H1 (cell line): ENCODE measurements at regions of chr5 and their contacts with region 1.

Region 1: DNA sequence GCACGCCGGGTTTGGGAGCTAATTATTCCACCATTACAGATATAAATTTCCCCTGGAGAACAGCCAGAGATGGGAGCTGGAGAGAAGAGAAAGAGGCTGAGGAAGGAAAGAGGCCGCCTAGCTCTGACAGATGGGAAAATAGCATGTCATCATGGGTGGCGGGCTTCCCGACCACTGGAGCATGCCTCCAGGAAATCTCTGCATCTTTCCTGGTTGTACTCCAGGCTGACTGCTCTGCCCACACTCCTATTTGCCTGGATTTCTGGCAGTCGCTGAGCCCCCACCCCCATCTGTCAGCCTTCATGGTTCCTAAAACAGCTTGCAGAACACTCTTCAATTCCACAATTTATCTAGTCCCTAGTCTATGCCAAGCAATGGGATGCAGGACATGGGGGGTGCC is 14.3 kb upstream of the GABRP start:
- DNase-seq: no peak
- H3K4me3 ChIP-seq: no peak overlapping the region
- H3K27ac ChIP-seq: no peak overlapping the region
- H3K4me1 ChIP-seq: peaks cover 4 to 16% (median 11%) of the 10 kb centered on the region in 4 experiments
- H3K27me3 ChIP-seq: no peaks in the 10 kb centered on the region; a peak in 1 of 7 replicates
- CTCF ChIP-seq: no peak
- EP300 ChIP-seq: no peak
- POLR2A ChIP-seq: no peak
- RAD21 ChIP-seq: no peak

Region 2: DNA sequence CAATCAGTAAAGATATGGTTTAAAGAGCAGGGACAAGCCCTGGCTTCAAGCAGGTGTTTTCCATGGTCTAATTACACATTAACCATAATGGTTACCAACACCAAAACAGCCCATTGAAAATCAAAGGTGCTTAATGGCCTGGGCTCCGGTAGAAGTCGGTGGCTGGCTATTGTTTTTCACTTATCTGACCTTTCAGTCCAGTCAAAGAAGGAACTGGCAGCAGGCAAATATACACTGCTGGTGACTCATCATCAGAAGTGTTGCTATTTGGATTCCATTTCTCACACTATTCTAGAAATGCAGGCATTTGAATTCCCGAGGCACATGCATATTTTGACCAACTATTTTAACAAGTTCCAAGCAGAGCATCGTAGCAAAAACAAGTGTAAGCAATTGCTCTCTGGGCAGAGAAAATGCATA is 12.1 kb before region 1 on chr5:
- CTCF ChIA-PET with region 1: interaction called, 151 read pairs
- POLR2A ChIA-PET with region 1: interaction called, 82 read pairs
- DNase-seq: no peak
- H3K4me3 ChIP-seq: no peak overlapping the region
- H3K27ac ChIP-seq: no peak overlapping the region
- H3K4me1 ChIP-seq: peaks cover 8 to 10% (median 9%) of the 10 kb centered on the region in 4 experiments
- H3K27me3 ChIP-seq: no peaks in the 10 kb centered on the region
- CTCF ChIP-seq: no peak
- EP300 ChIP-seq: no peak
- POLR2A ChIP-seq: no peak
- RAD21 ChIP-seq: no peak

Region 3: DNA sequence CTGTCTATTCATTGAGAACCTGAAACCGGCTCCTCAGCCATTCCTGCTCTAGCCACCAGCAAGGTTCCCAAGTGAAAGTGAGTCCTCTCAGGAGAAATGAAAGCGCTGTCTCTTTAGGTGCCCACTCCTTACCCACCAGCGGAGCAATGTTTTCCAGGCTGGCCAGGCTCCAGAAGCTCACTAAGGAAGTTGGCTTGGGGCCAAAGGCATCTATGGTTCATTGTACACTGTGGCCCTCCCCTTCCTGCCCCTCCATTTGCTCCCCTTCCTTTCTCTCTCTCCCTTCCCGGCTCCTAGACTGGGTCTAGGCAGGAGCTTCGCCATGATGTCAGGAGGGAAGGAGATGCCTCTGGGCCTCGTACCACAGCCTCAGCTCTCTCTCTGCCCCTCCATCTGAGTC is 13.2 kb after region 1 on chr5:
- CTCF ChIA-PET with region 1: interaction called, 30 read pairs
- POLR2A ChIA-PET with region 1: interaction called, 13 read pairs
- DNase-seq: no peak
- H3K4me3 ChIP-seq: no peak overlapping the region
- H3K27ac ChIP-seq: no peak overlapping the region
- H3K4me1 ChIP-seq: peaks cover 0 to 5% (median 0%) of the 10 kb centered on the region in 4 experiments; a peak in 1 of 7 replicates
- H3K27me3 ChIP-seq: no peaks in the 10 kb centered on the region
- CTCF ChIP-seq: no peak
- EP300 ChIP-seq: no peak
- POLR2A ChIP-seq: no peak
- RAD21 ChIP-seq: no peak

Region 4: DNA sequence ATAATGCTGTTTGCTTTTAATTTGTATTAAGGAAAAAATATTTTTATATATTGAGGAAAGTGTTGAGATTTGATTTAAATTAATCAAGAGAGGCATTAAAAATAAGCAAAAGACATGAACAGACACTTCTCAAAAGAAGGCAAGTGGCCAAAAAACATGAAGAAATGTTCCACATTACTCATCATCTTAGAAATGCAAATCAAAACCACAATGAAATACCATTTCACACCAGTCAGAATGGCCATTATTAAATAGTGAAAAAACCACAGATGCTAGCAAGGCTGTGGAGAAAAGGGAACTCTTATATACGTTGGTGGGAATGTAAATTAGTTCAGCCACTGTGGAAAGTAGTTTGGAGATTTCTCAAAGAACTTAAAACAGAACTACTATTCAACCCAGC is 138.5 kb after region 1 on chr5:
- CTCF ChIA-PET with region 1: no interaction called
- POLR2A ChIA-PET with region 1: no interaction called
- DNase-seq: no peak
- H3K4me3 ChIP-seq: no peak overlapping the region
- H3K27ac ChIP-seq: no peak overlapping the region
- H3K4me1 ChIP-seq: no peaks in the 10 kb centered on the region; a peak in 1 of 7 replicates
- H3K27me3 ChIP-seq: no peaks in the 10 kb centered on the region
- CTCF ChIP-seq: no peak
- EP300 ChIP-seq: no peak
- POLR2A ChIP-seq: no peak
- RAD21 ChIP-seq: no peak